Dendritic cell treated with granulocyte-macrophage colony-stimulating factor and Interleukin-4, amounts not matched to agents 40 ng/mL and 50 ng/mL, for 4 days (primary cell): ENCODE measurements at regions of chr18 and their contacts with region 1.

Region 1: GRCh38 chr18:55589625-55590291 is 1.8 kb upstream of the TCF4 start:
- H3K4me3 Mint-ChIP-seq: peak overlapping the region; percentile 81
- H3K27ac Mint-ChIP-seq: peak overlapping the region; percentile 86
- H3K4me1 Mint-ChIP-seq: peaks cover 33% of the 10 kb centered on the region
- H3K27me3 Mint-ChIP-seq: no peaks in the 10 kb centered on the region

Region 2: DNA sequence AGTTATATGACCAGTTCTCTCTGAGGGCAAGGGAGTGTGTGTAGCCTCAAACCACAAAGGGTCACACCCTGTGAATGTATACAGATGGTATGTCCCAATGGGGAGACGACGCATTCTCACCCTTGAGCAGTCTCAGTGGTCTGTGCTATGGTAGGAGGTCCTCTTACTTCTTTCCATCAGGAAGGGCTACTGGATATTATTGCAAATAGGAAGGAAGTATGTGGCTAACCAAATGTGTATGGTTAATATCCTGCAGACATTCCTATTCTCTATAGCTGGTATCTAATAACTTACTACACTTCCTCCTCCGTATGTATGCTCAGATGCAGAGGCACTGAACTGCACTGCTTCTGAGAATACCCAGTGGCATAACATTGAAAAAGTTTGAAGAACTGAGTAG is 323.8 kb before region 1 on chr18:
- intact Hi-C with region 1: loop called (anchors 10 kb)
- H3K4me3 Mint-ChIP-seq: no peak overlapping the region
- H3K27ac Mint-ChIP-seq: peak overlapping the region; percentile 95
- H3K4me1 Mint-ChIP-seq: peaks cover 52% of the 10 kb centered on the region
- H3K27me3 Mint-ChIP-seq: no peaks in the 10 kb centered on the region

Region 3: DNA sequence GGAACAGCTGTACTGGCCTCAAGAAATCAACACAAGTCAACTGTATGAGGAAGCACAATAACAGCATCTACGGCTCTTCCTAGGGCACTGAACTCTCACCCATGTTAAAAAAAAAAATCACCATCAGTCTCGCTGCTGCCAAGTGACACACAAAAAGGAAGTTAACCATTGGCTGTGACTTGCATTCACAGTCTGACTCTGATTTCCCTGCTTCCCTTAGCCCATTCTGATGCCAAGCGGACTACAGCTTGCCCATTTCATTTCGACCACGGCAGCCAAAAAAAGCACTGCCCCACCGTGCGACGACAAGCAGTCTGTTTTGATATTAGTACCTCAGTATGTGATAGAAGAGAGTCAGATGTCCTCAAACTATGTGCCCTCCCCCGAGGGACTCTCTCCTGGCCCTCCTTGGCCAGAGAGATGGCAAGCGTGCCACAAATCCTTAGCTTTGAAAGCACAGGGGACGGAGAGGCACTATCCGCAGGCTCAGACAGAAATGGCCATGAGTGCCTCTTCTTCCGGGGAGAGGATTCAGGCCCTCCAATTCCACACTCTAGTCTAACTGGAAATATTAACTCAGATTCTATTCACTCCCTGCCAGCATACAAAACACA is 251.7 kb before region 1 on chr18:
- intact Hi-C with region 1: loop called (anchors 5 kb)
- H3K4me3 Mint-ChIP-seq: peak overlapping the region; percentile 40
- H3K27ac Mint-ChIP-seq: peak overlapping the region; percentile 76
- H3K4me1 Mint-ChIP-seq: peaks cover 20% of the 10 kb centered on the region
- H3K27me3 Mint-ChIP-seq: no peaks in the 10 kb centered on the region

Region 4: GRCh38 chr18:55465313-55465712 is 124.4 kb before region 1 on chr18:
- intact Hi-C with region 1: loop called (anchors 10 kb)
- H3K4me3 Mint-ChIP-seq: no peak overlapping the region
- H3K27ac Mint-ChIP-seq: peak overlapping the region; percentile 48
- H3K4me1 Mint-ChIP-seq: peaks cover 22% of the 10 kb centered on the region
- H3K27me3 Mint-ChIP-seq: no peaks in the 10 kb centered on the region

Region 5: GRCh38 chr18:55546851-55547704 is 42.7 kb before region 1 on chr18:
- intact Hi-C with region 1: no loop called
- H3K4me3 Mint-ChIP-seq: no peak overlapping the region
- H3K27ac Mint-ChIP-seq: no peak overlapping the region
- H3K4me1 Mint-ChIP-seq: no peaks in the 10 kb centered on the region
- H3K27me3 Mint-ChIP-seq: no peaks in the 10 kb centered on the region

Region 6: DNA sequence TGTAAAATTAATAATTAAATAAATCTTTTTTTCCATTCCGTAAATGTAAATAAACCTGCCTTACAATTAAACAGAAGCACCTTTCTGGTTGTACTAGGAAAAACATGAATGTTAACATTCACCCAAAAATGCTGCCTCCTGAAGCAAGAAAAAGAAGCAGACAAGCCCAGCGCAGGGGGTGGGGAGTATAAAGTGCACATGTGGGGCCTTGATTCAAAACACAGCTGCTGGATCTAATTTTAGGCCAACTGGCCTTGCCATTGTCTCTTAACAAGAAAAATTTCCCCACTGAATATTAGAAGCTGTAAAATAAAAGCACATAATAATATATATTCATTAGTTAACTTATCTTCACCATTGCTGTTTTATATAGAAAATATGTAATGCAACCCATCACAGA is 30.0 kb before region 1 on chr18:
- intact Hi-C with region 1: no loop called
- H3K4me3 Mint-ChIP-seq: no peak overlapping the region
- H3K27ac Mint-ChIP-seq: no peak overlapping the region
- H3K4me1 Mint-ChIP-seq: no peaks in the 10 kb centered on the region
- H3K27me3 Mint-ChIP-seq: no peaks in the 10 kb centered on the region

Region 7: DNA sequence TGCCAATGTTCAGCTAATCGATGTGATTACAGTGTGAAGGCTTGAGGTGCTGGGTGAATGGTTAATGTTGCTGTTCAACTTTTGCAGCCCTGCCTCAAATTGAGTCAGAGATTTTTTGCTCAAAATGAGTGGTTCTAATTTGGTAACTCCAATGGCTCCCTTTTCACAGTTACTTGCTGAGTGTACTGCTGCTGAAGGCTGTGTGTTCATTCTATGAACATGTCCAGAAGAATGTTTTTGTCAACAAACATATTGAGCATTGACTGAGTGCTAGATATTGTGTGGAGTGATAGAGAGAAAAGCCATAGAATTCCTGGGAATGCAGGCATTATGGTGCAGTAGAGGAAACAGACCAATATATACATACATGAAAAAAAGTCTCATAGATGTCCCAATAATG is 37.2 kb after region 1 on chr18:
- intact Hi-C with region 1: no loop called
- H3K4me3 Mint-ChIP-seq: no peak overlapping the region
- H3K27ac Mint-ChIP-seq: no peak overlapping the region
- H3K4me1 Mint-ChIP-seq: no peaks in the 10 kb centered on the region
- H3K27me3 Mint-ChIP-seq: no peaks in the 10 kb centered on the region

Region 8: GRCh38 chr18:56575819-56576663 is 986.3 kb after region 1 on chr18:
- intact Hi-C with region 1: loop called (anchors 10 kb)
- H3K4me3 Mint-ChIP-seq: no peak overlapping the region
- H3K27ac Mint-ChIP-seq: no peak overlapping the region
- H3K4me1 Mint-ChIP-seq: peaks cover 35% of the 10 kb centered on the region
- H3K27me3 Mint-ChIP-seq: no peaks in the 10 kb centered on the region